GM10248 (cell line): ENCODE measurements at regions of chr7 and their contacts with region 1.

Region 1: GRCh38 chr7:30983042-30983913 is 19.5 kb downstream of the GHRHR start:
- DNase-seq: peak; percentile 85
- CTCF ChIP-seq: peak; percentile 99

Region 2: GRCh38 chr7:30800785-30801252 is 182.5 kb before region 1 on chr7:
- CTCF ChIA-PET with region 1: interaction called, 12 read pairs
- POLR2A ChIA-PET with region 1: no interaction called
- DNase-seq: peak; percentile 76
- CTCF ChIP-seq: peak; percentile 69

Region 3: DNA sequence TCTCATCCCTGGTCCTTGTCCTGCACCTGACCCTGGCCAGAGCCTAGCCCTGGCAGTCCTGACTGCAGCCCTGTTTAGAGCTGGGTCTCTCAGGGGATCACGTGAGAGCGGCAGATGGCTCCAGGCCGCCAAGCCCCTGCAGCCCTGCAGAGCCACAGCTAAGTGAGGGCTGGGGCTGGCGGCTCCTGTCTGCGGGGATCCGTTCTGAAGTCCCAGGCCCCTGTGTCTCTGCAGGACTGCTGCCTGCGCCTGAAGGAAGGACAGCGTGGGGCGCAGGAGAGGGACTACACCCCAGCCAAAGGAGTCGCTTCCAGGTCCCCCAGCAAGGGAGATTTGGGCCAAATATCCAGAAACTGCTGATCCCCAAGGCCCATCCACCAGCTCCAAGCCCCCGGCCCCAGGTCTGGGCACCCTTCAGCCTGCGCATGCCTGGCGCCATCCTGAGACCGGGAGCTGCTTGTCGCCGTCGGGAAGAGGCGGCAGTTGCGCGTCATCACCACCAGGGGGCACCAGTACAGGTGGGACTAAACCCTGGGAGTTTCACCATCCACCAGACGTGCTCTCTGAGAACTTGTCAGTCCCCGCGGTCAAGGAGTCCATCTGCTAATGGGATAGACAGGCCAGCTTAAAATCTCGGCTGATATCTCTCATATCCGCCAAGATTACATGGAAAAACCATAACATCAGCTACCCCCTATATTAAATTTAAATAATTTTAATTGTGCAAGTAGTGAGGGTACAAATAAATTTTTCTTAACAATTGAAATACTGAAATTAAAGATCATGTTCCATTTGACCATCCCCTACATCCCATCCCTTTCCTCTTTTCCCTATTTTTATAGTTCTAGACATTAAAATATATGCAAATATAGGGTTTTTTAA is 44.6 kb before region 1 on chr7:
- CTCF ChIA-PET with region 1: interaction called, 21 read pairs
- POLR2A ChIA-PET with region 1: no interaction called
- DNase-seq: peak; percentile 86
- CTCF ChIP-seq: peak; percentile 95

Region 4: GRCh38 chr7:30996256-30996655 is 13.0 kb after region 1 on chr7:
- CTCF ChIA-PET with region 1: interaction called, 48 read pairs
- POLR2A ChIA-PET with region 1: no interaction called
- DNase-seq: no peak
- CTCF ChIP-seq: no peak

Region 5: DNA sequence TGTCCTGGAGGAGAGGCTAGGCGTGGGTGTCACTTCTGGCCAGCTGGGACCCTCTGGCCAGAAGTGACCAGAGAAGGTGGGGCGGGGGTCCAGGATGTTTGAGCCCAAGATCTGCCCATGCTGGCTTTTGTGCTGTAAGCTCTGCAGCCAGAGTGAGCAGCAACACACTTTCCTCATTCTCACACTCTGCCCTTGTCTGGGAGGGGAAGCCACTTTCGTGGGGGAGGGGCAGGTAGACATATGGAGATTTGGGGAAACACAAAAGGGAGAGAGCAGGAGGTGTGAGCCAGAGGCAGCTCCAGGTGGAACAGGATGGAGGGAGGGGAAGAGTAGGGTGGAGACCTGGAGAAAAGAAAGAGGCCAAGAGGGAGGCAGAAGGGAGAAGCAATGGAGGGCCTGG is 37.4 kb after region 1 on chr7:
- CTCF ChIA-PET with region 1: interaction called, 10 read pairs
- POLR2A ChIA-PET with region 1: no interaction called
- DNase-seq: no peak
- CTCF ChIP-seq: no peak

Region 6: GRCh38 chr7:31129067-31129466 is 145.8 kb after region 1 on chr7:
- CTCF ChIA-PET with region 1: interaction called, 219 read pairs
- POLR2A ChIA-PET with region 1: no interaction called
- DNase-seq: no peak
- CTCF ChIP-seq: no peak